Caco-2 (cell line): ENCODE measurements at regions of chr2 and their contacts with region 1.

Region 1: GRCh38 chr2:149017116-149017985 is 21.1 kb upstream of the LYPD6B start:
- DNase-seq: peak; percentile 82 to 87
- H3K4me3 ChIP-seq: no peak overlapping the region
- H3K4me3 Mint-ChIP-seq: no peak overlapping the region
- H3K27ac Mint-ChIP-seq: peak overlapping the region; percentile 64
- H3K4me1 ChIP-seq: peaks cover 33% of the 10 kb centered on the region
- H3K4me1 Mint-ChIP-seq: peaks cover 56% of the 10 kb centered on the region
- H3K27me3 ChIP-seq: no peaks in the 10 kb centered on the region
- H3K27me3 Mint-ChIP-seq: no peaks in the 10 kb centered on the region
- CTCF ChIP-seq: peak; percentile 91 to 92

Region 2: GRCh38 chr2:149040451-149040850 is 23.1 kb after region 1 on chr2:
- CTCF ChIA-PET with region 1: interaction called, 65 read pairs
- POLR2A ChIA-PET with region 1: no interaction called
- intact Hi-C with region 1: loop called (anchors 1 kb)
- DNase-seq: peak in 1 of 2 experiments; percentile 57
- H3K4me3 ChIP-seq: no peak overlapping the region
- H3K4me3 Mint-ChIP-seq: peak overlapping the region; percentile 86
- H3K27ac Mint-ChIP-seq: no peak overlapping the region
- H3K4me1 ChIP-seq: 0 out of 2 replicates have a peak, but pooled peaks cover 5% of the 10 kb centered on the region
- H3K4me1 Mint-ChIP-seq: peaks cover 16% of the 10 kb centered on the region
- H3K27me3 ChIP-seq: no peaks in the 10 kb centered on the region
- H3K27me3 Mint-ChIP-seq: no peaks in the 10 kb centered on the region
- CTCF ChIP-seq: peak; percentile 4 to 34

Region 3: GRCh38 chr2:149125002-149125725 is 107.8 kb after region 1 on chr2:
- CTCF ChIA-PET with region 1: no interaction called
- POLR2A ChIA-PET with region 1: interaction called, 4 read pairs
- intact Hi-C with region 1: loop called (anchors 1 kb)
- DNase-seq: peak; percentile 88 to 90
- H3K4me3 ChIP-seq: 0 out of 2 replicates have a peak overlapping the region, but pooled peaks have one; percentile 5
- H3K4me3 Mint-ChIP-seq: peak overlapping the region; percentile 54
- H3K27ac Mint-ChIP-seq: peak overlapping the region; percentile 78
- H3K4me1 ChIP-seq: peaks cover 39% of the 10 kb centered on the region
- H3K4me1 Mint-ChIP-seq: peaks cover 39% of the 10 kb centered on the region
- H3K27me3 ChIP-seq: no peaks in the 10 kb centered on the region
- H3K27me3 Mint-ChIP-seq: no peaks in the 10 kb centered on the region
- CTCF ChIP-seq: no peak

Region 4: DNA sequence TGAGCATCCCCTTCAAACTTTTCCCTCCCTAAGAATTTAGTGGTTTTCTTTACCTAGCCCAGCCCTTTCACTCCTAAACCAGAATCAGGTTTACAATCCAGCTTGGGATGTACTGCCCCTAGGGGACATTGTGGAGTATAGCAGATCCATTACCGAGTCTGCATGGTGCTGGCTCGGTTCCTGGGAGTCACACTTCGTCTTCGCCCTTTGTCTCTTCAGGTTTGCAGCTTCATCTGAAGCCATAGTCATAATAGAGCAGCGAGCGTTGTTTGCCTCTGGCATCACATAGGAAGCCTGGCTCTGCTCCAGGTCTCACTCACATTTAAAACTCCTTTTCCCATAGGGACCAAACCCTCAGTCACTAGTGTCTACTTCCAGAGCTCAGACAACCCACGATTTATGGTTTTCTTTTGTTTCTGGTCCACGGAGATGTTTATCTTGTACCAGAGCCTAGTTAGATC is 296.2 kb after region 1 on chr2:
- CTCF ChIA-PET with region 1: interaction called, 6 read pairs
- POLR2A ChIA-PET with region 1: no interaction called
- intact Hi-C with region 1: loop called (anchors 1 kb)
- DNase-seq: peak in 1 of 2 experiments; percentile 56
- H3K4me3 ChIP-seq: no peak overlapping the region
- H3K4me3 Mint-ChIP-seq: no peak overlapping the region
- H3K27ac Mint-ChIP-seq: no peak overlapping the region
- H3K4me1 ChIP-seq: 0 out of 2 replicates have a peak, but pooled peaks cover 4% of the 10 kb centered on the region
- H3K4me1 Mint-ChIP-seq: peaks cover 28% of the 10 kb centered on the region
- H3K27me3 ChIP-seq: no peaks in the 10 kb centered on the region
- H3K27me3 Mint-ChIP-seq: no peaks in the 10 kb centered on the region
- CTCF ChIP-seq: peak; percentile 82 to 84

Region 5: GRCh38 chr2:149388120-149388798 is 370.9 kb after region 1 on chr2:
- CTCF ChIA-PET with region 1: no interaction called
- POLR2A ChIA-PET with region 1: no interaction called
- intact Hi-C with region 1: loop called (anchors 1 kb)
- DNase-seq: peak; percentile 40 to 44
- H3K4me3 ChIP-seq: no peak overlapping the region
- H3K4me3 Mint-ChIP-seq: no peak overlapping the region
- H3K27ac Mint-ChIP-seq: no peak overlapping the region
- H3K4me1 ChIP-seq: no peaks in the 10 kb centered on the region
- H3K4me1 Mint-ChIP-seq: no peaks in the 10 kb centered on the region
- H3K27me3 ChIP-seq: no peaks in the 10 kb centered on the region
- H3K27me3 Mint-ChIP-seq: no peaks in the 10 kb centered on the region
- CTCF ChIP-seq: peak; percentile 33 to 43

Region 6: DNA sequence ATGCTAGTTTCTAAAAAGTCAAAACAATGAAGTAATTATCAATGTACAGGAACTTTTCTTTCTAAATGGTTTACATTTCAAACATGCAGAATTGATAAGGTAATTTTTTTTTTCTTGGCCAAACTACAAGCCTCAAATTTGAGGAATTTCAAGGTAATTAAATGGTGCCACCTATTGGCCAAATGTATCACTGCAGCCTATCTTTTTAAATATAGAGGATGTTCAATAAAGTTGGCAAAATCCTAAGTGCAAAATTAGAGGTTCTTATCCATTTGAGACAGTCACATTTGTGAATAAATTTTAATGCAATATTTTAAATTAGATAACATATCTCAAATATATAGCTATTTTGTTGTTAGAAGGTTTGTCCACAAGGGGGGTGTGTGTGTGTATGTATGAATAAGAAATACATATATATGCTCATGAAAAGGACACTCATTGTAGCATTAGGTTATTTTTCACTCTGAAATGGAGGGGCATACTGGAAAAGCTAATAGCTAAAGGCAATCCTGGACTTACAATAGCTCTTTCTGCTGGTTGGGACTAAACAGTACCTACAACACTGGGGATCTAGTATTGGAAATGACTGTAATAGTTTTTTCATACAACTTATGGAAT is 544.1 kb after region 1 on chr2:
- CTCF ChIA-PET with region 1: no interaction called
- POLR2A ChIA-PET with region 1: no interaction called
- intact Hi-C with region 1: loop called (anchors 1 kb)
- DNase-seq: peak in 1 of 2 experiments; percentile 55
- H3K4me3 ChIP-seq: no peak overlapping the region
- H3K4me3 Mint-ChIP-seq: no peak overlapping the region
- H3K27ac Mint-ChIP-seq: no peak overlapping the region
- H3K4me1 ChIP-seq: peaks cover 7% of the 10 kb centered on the region; the same call in 1 of the 2 replicates
- H3K4me1 Mint-ChIP-seq: no peaks in the 10 kb centered on the region
- H3K27me3 ChIP-seq: no peaks in the 10 kb centered on the region
- H3K27me3 Mint-ChIP-seq: no peaks in the 10 kb centered on the region
- CTCF ChIP-seq: peak; percentile 62 to 84